HEK293T (cell line): ENCODE measurements at regions of chr11 and their contacts with region 1.

Region 1: DNA sequence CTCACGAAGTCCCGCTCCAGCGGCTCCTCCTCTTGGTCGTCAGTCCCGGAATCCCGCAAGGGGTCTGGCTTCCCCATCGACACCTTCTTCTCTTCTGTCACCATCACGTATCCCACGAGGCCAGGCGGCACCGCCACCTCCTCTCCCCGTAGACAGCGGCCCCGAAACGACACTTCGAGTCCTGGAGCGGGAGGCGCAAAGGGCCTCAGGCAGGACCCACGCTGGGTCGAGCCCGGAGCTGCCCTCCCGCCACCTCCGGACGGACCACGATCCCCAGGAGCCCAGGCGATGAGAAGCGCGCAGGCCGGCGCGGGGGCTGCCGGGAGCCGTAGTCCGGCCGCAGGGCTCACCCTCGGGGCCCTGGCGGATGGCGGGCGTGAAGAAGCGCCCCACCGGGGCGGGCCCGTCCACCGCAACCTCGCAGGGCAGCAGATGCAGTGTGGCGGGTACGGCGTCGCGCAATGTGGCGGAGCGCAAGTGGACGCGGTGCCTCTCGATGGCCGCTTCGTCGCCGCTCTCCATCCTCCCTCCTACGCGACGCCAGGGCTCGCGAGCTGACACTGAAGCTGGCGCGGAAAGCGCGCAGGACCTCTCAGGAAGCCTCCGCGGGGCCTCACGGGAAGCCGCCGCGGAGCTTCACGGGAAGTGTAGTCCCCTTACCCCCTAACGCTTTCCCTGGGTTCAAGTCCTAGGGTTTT is at the start of gene RNASEH2C:
- DNase-seq: peak; percentile 85

Region 2: GRCh38 chr11:65652511-65653231 is 67.7 kb before region 1 on chr11:
- CTCF ChIA-PET with region 1: no interaction called
- POLR2A ChIA-PET with region 1: no interaction called
- DNase-seq: peak; percentile 96

Region 3: DNA sequence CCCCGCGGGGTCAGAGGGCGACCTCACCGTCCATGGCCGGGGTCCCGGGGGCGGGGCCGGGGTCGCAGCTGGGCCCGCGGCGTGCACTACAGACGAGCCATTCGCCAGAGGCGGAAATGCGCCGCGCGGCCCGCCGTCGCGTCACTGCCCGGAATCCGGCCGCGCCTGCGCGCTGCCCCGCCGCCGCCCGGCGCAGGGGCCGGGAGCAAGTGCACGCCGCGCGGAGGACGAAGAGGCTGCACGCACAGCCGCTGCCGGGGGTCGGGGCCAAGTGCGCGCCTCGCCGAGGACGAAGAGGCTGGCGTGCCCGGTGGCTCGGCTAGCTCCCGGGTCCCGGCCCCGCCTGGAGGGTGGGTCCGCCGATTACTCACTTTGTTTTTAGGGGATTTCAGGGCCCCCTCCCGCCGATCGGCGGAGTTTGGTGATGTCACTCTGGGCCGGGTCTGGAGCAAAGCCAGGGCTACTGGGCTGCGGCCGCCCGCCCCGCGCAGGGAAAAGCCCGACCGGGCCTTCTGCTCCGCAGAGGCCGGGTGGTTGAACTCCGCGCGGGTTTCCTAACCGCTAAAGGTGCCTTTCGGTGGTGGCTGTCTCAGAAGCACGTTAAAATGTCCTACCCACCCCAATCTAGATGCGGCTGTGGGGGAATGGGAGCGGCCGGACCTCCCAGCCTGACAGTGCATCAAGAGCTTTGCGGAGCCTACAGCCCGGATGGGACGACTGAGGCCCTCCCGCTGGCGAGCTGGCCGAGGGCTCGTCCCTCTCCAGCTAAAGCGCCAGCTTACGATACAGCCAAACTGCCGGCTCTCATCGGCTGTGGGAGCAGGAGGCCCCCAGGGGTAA is 57.4 kb before region 1 on chr11 and contains the start of gene RELA:
- CTCF ChIA-PET with region 1: no interaction called
- POLR2A ChIA-PET with region 1: interaction called, 12 read pairs
- DNase-seq: peak; percentile 96

Region 4: DNA sequence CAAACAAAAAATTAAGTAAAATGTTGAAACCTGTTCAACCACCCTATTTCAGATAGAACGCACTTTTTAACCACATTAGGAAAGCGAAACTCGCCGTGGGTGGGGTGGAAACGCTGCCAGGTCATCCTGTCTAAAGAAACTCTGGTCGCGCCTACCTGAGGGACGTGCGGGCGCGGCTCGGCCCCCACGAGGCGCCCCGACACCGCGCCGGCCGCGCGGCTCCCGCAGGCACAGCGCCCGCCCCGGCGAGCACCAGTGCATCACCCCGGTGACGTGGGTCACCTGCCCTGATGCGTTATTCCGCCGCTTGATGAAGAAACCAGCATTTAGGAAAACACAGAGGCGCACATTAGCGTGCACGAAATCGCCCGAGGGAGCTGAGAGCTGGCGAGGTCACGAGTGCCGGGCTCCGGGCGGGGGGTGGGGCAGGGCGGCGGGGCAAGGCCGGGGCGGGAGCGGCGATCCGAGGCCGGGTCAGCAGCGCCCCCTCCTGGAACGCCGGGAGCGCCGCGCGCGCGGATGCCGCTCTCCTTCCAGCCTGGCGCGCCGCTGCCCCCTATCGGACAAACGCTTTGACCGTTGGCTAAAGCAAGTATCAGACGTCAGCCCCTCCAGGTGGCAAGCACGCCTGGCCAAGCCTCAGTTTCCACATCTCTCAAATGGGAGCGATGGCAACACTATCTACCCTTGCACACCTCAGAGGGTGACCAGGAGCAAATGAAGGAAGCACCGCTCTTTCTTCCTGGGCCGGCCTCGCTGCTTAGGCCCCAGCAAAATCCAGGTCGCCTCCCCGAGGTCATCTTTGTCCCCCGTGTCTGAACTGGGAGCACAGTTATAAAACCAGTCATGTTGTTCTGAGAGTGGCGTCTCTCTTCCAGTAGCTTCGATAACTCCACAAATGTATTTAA is 97.7 kb after region 1 on chr11:
- CTCF ChIA-PET with region 1: interaction called, 3 read pairs
- POLR2A ChIA-PET with region 1: interaction called, 15 read pairs
- DNase-seq: peak; percentile 96